B cell (primary cell): ENCODE measurements at regions of chr1 and their contacts with region 1.

Region 1: DNA sequence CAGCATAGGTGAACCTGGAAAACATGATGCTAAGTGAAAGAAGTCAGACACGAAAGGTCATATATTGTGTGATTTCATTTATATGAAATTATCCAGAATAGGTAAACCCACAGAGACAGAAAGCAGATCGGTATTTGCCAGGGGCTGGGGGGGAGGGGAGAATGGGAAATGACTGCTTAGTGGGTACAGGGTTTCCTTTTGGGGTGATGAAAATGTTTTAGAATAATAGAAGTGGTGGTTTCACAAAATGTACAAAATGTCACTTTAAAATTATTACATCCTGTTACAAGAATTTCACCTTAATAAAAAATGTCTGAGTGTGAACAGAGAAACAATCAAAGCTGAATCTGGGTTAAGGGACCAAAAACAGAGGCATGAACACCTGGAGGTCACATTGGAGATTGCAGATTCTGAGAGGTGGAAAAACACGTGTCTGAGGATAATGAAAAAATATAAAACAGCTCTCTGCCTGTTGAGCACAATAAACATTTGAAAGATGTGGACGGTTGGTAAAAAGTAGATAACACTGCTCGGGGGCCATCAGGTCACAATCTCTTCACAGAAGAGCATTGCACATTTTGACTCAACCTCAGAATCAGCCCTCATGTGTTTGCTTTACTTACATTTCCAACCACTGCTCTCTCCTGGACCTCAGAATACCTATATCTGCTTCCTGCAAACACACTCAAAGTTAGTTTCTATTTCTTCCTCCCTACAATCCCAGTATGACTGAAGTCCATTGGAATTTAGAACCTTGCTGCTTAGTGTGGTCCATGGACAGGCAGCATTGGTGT is 3.2 kb downstream of the SLAMF6 start:
- DNase-seq: peak; percentile 47
- ATAC-seq: peak; percentile 37
- H3K4me3 ChIP-seq: peak overlapping the region; percentile 14 to 96 (median 67)
- H3K4me3 Mint-ChIP-seq: peak overlapping the region; percentile 99
- H3K27ac ChIP-seq: peak overlapping the region; percentile 9 to 91
- H3K27ac Mint-ChIP-seq: peak overlapping the region; percentile 99
- H3K4me1 ChIP-seq: peaks cover 53 to 66% of the 10 kb centered on the region in 2 donors
- H3K4me1 Mint-ChIP-seq: peaks cover 90% of the 10 kb centered on the region
- H3K27me3 ChIP-seq: no peaks in the 10 kb centered on the region
- H3K27me3 Mint-ChIP-seq: no peaks in the 10 kb centered on the region
- CTCF ChIP-seq: peak; percentile 59

Region 2: DNA sequence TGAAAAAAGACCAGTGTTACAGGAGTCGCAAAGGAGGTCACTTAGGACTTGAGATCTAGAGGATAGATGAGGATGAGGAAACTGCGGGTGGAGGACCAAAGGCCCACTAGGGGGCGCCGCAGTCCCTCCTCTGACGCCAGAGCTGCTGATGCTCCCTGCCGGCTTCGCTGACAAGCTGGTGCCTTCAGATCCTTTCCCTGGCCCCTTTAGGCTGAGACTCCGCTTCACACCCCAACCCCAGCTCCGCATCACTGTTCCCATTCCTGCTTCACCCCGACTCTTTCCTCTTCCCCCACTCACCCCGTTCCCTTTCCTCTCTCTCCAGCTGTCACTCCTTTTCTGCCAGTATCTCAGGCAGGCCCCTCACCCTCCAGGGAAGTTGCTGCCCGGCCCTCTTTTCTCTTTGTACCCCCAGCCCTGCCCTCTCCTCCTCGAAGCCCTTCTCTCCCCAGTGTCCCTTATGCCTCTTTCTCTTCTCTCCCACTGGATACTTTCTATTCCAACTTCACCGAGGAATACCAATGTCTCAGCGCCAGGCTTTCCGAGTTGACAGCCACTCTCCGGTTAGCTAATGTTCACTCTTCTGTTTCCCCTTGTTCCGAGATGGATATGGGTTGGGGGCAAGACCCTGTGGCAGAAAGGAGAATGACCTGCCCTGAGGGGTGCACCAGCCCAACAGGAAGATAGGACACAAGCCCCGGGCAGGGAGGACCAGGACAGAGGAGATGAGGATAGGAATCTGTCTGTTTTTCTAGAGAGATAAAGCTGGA is 434.0 kb before region 1 on chr1:
- CTCF ChIA-PET with region 1: no interaction called
- POLR2A ChIA-PET with region 1: no interaction called
- intact Hi-C with region 1: no loop called
- DNase-seq: peak; percentile 79
- ATAC-seq: peak; percentile 58
- H3K4me3 ChIP-seq: no peak overlapping the region
- H3K4me3 Mint-ChIP-seq: peak overlapping the region; percentile 26
- H3K27ac ChIP-seq: no peak overlapping the region
- H3K27ac Mint-ChIP-seq: peak overlapping the region; percentile 21
- H3K4me1 ChIP-seq: peaks cover 6 to 9% of the 10 kb centered on the region in 2 donors
- H3K4me1 Mint-ChIP-seq: peaks cover 12% of the 10 kb centered on the region
- H3K27me3 ChIP-seq: peaks cover 0 to 25% (median 18%) of the 10 kb centered on the region in 4 experiments
- H3K27me3 Mint-ChIP-seq: peaks cover 20% of the 10 kb centered on the region
- CTCF ChIP-seq: peak; percentile 85

Region 3: DNA sequence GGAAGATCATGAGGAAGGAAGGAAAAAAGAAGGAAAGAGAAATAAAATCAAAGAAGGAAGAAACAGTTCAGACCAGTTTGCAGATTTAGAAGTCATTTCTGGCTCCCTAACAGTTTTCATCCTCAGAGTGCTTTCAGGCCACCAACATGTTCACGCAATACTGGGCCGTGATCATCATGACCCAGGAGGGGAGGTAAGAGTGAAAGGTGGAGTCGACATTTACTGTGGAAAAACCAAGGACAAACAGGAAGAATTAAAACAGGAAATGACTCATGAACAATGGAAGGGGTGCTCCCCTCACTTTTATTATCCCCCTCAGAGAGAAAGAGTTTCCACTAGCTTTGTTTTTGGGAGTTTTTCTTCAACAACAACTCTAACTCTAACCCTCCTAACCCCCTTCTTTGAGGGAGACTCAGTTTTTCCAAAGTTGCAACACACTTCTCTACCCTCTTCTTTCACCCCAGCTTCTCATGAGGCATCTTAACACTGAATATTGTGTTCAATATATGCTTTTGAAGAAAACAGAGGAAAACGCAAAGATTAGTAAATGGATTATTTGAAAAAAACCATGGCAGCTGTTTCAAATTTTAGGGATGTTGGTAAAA is 59.1 kb before region 1 on chr1:
- CTCF ChIA-PET with region 1: interaction called, 4 read pairs
- POLR2A ChIA-PET with region 1: no interaction called
- intact Hi-C with region 1: loop called (anchors 10 kb)
- DNase-seq: no peak
- ATAC-seq: peak; percentile 48
- H3K4me3 ChIP-seq: peak overlapping the region in 3 of 5 experiments; percentile 5 to 58 (median 24)
- H3K4me3 Mint-ChIP-seq: peak overlapping the region; percentile 80
- H3K27ac ChIP-seq: peak overlapping the region; percentile 81
- H3K27ac Mint-ChIP-seq: peak overlapping the region; percentile 92
- H3K4me1 ChIP-seq: peaks cover 46 to 47% of the 10 kb centered on the region in 2 donors
- H3K4me1 Mint-ChIP-seq: peaks cover 62% of the 10 kb centered on the region
- H3K27me3 ChIP-seq: no peaks in the 10 kb centered on the region
- H3K27me3 Mint-ChIP-seq: no peaks in the 10 kb centered on the region
- CTCF ChIP-seq: no peak

Region 4: GRCh38 chr1:160489513-160490261 is 30.2 kb before region 1 on chr1:
- CTCF ChIA-PET with region 1: interaction called, 9 read pairs
- POLR2A ChIA-PET with region 1: interaction called, 7 read pairs
- intact Hi-C with region 1: loop called (anchors 2 kb)
- DNase-seq: peak; percentile 78
- ATAC-seq: peak; percentile 21
- H3K4me3 ChIP-seq: no peak overlapping the region
- H3K4me3 Mint-ChIP-seq: peak overlapping the region; percentile 81
- H3K27ac ChIP-seq: peak overlapping the region; percentile 85 to 93
- H3K27ac Mint-ChIP-seq: no peak overlapping the region
- H3K4me1 ChIP-seq: peaks cover 82 to 84% of the 10 kb centered on the region in 2 donors
- H3K4me1 Mint-ChIP-seq: peaks cover 4% of the 10 kb centered on the region
- H3K27me3 ChIP-seq: no peaks in the 10 kb centered on the region
- H3K27me3 Mint-ChIP-seq: no peaks in the 10 kb centered on the region
- CTCF ChIP-seq: no peak

Region 5: GRCh38 chr1:160504666-160505065 is 15.2 kb before region 1 on chr1:
- CTCF ChIA-PET with region 1: interaction called, 11 read pairs
- POLR2A ChIA-PET with region 1: no interaction called
- intact Hi-C with region 1: loop called (anchors 2 kb)
- DNase-seq: no peak
- ATAC-seq: no peak
- H3K4me3 ChIP-seq: no peak overlapping the region
- H3K4me3 Mint-ChIP-seq: no peak overlapping the region
- H3K27ac ChIP-seq: peak overlapping the region in 1 of 2 donors; percentile 10
- H3K27ac Mint-ChIP-seq: peak overlapping the region; percentile 58
- H3K4me1 ChIP-seq: peaks cover 34 to 37% of the 10 kb centered on the region in 2 donors
- H3K4me1 Mint-ChIP-seq: peaks cover 66% of the 10 kb centered on the region
- H3K27me3 ChIP-seq: no peaks in the 10 kb centered on the region
- H3K27me3 Mint-ChIP-seq: no peaks in the 10 kb centered on the region
- CTCF ChIP-seq: no peak

Region 6: GRCh38 chr1:160539990-160540858 is 20.4 kb after region 1 on chr1:
- CTCF ChIA-PET with region 1: interaction called, 20 read pairs
- POLR2A ChIA-PET with region 1: interaction called, 4 read pairs
- intact Hi-C with region 1: loop called (anchors 1 kb)
- DNase-seq: peak; percentile 81
- ATAC-seq: peak; percentile 97
- H3K4me3 ChIP-seq: peak overlapping the region in 1 of 5 experiments; percentile 19
- H3K4me3 Mint-ChIP-seq: peak overlapping the region; percentile 63
- H3K27ac ChIP-seq: peak overlapping the region; percentile 72 to 90
- H3K27ac Mint-ChIP-seq: peak overlapping the region; percentile 93
- H3K4me1 ChIP-seq: peaks cover 46% of the 10 kb centered on the region in 2 donors
- H3K4me1 Mint-ChIP-seq: peaks cover 48% of the 10 kb centered on the region
- H3K27me3 ChIP-seq: no peaks in the 10 kb centered on the region
- H3K27me3 Mint-ChIP-seq: no peaks in the 10 kb centered on the region
- CTCF ChIP-seq: no peak

Region 7: GRCh38 chr1:160575112-160575664 is 55.3 kb after region 1 on chr1:
- CTCF ChIA-PET with region 1: no interaction called
- POLR2A ChIA-PET with region 1: interaction called, 3 read pairs
- intact Hi-C with region 1: loop called (anchors 10 kb)
- DNase-seq: peak; percentile 78
- ATAC-seq: peak; percentile 74
- H3K4me3 ChIP-seq: peak overlapping the region in 3 of 5 experiments; percentile 9 to 89 (median 27)
- H3K4me3 Mint-ChIP-seq: peak overlapping the region; percentile 76
- H3K27ac ChIP-seq: peak overlapping the region; percentile 59 to 74
- H3K27ac Mint-ChIP-seq: peak overlapping the region; percentile 90
- H3K4me1 ChIP-seq: peaks cover 52 to 53% of the 10 kb centered on the region in 2 donors
- H3K4me1 Mint-ChIP-seq: peaks cover 76% of the 10 kb centered on the region
- H3K27me3 ChIP-seq: no peaks in the 10 kb centered on the region
- H3K27me3 Mint-ChIP-seq: no peaks in the 10 kb centered on the region
- CTCF ChIP-seq: no peak